PC-9 (cell line): ENCODE measurements at regions of chr11 and their contacts with region 1.

Region 1: DNA sequence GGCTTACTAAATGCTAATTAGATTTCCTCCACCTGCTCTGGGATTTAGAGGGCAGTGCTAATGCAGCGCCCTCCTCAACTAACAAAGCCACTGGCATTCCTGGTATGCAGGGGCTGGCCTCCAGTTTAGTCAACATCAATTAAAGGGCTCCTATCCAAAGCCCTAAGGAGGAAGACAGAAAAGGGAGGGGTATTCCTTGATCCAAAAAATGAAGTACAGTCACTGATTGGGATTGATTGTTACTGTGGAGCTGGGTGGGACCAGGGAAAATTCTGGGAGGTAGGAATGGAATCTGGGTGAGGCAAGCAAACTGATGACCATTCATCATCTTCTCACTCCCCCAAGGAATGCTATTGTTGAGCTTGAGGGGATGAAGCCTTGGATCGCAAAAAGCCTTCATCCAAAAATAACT is 52.2 kb downstream of the GAB2 start:
- DNase-seq: peak; percentile 84 to 95
- H3K4me3 ChIP-seq: no peak overlapping the region; the same call in 1 of the 2 replicates
- H3K27ac ChIP-seq: peak overlapping the region; percentile 40
- H3K4me1 ChIP-seq: peaks cover 22% of the 10 kb centered on the region
- H3K27me3 ChIP-seq: no peaks in the 10 kb centered on the region
- CTCF ChIP-seq: no peak

Region 2: GRCh38 chr11:78030429-78031325 is 334.7 kb before region 1 on chr11:
- CTCF ChIA-PET with region 1: interaction called, 10 read pairs
- POLR2A ChIA-PET with region 1: no interaction called
- intact Hi-C with region 1: no loop called
- DNase-seq: peak; percentile 89 to 92
- H3K4me3 ChIP-seq: no peak overlapping the region
- H3K27ac ChIP-seq: 0 out of 2 replicates have a peak overlapping the region, but pooled peaks have one; percentile 11
- H3K4me1 ChIP-seq: peaks cover 55% of the 10 kb centered on the region
- H3K27me3 ChIP-seq: no peaks in the 10 kb centered on the region
- CTCF ChIP-seq: no peak

Region 3: GRCh38 chr11:78188286-78189173 is 176.9 kb before region 1 on chr11 and contains the starts of genes KCTD21 and USP35:
- CTCF ChIA-PET with region 1: no interaction called
- POLR2A ChIA-PET with region 1: no interaction called
- intact Hi-C with region 1: loop called (anchors 1 kb)
- DNase-seq: peak; percentile 97 to 99
- H3K4me3 ChIP-seq: peak within 1 kb of the TSS; percentile 80
- H3K27ac ChIP-seq: no peak within 1 kb of the TSS
- H3K4me1 ChIP-seq: peaks cover 43% of the 10 kb centered on the region
- H3K27me3 ChIP-seq: no peaks in the 10 kb centered on the region
- CTCF ChIP-seq: no peak
- total RNA-seq, gene KCTD21: 16.1 and 16.5 TPM in 2 replicates
- total RNA-seq, gene USP35: 12.8 and 13.5 TPM in 2 replicates

Region 4: GRCh38 chr11:78281511-78281910 is 83.9 kb before region 1 on chr11:
- CTCF ChIA-PET with region 1: no interaction called
- POLR2A ChIA-PET with region 1: no interaction called
- intact Hi-C with region 1: loop called (anchors 5 kb)
- DNase-seq: no peak
- H3K4me3 ChIP-seq: no peak overlapping the region
- H3K27ac ChIP-seq: no peak overlapping the region
- H3K4me1 ChIP-seq: peaks cover 29% of the 10 kb centered on the region
- H3K27me3 ChIP-seq: no peaks in the 10 kb centered on the region
- CTCF ChIP-seq: no peak